Activated CD4-positive, alpha-beta T cell treated with anti-CD3 and anti-CD28 coated beads, Interleukin-2, amount 10 ng/mL, durations not matched to agents 24 days and 14 days (primary cell): ENCODE measurements at regions of chr5 and their contacts with region 1.

Region 1: DNA sequence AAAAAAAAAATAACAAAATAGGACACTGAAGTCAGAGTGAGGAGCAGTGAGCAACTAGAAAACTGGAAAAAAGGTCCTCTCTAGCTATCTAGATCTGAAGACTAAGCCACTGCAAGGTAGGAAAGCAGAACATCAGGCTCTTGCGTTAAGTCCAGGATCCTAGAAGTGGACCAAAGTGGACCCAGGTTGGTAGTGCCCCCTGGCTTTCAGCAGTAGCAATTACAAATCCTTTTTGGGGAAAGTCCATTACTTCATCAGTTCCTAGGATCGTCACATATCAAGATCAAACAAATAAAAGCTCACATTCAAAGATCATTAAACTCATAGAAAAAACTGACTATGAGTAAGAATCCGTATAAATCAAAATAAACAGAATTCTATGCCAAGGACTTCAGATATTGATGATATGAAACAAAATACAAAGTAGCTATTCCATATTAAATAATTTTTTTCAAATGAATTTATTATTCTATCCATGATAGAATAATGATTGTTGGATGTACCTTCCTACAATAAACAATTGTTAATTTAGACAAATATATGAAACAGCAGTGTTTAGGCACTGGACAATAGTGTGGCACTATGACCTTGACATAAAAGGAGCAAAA is 6.5 kb upstream of the RICTOR start:
- DNase-seq: peak; percentile 76
- H3K4me3 Mint-ChIP-seq: no peak overlapping the region
- H3K27ac Mint-ChIP-seq: no peak overlapping the region
- H3K4me1 Mint-ChIP-seq: peaks cover 20% of the 10 kb centered on the region
- H3K27me3 Mint-ChIP-seq: peaks cover 14% of the 10 kb centered on the region

Region 2: DNA sequence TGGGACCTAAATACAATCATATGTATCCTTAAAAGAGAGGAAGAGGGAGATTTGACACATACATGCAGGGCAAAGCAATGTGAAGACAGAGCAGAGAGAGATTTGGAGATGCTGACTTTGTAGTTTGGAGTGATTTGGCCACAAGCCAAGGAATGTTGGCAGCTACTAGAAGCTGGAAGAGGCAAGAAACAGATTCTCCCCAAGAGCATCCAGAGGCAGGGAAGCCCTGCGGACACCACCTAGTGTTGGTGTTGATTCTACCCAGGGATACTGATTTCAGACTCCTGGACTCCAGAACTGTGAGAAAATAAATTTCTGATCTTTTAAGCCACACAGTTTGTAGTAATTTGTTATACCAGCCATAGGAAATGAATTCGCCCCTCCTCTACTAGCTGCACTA is 299.8 kb before region 1 on chr5:
- intact Hi-C with region 1: no loop called
- DNase-seq: no peak
- H3K4me3 Mint-ChIP-seq: no peak overlapping the region
- H3K27ac Mint-ChIP-seq: no peak overlapping the region
- H3K4me1 Mint-ChIP-seq: no peaks in the 10 kb centered on the region
- H3K27me3 Mint-ChIP-seq: peaks cover 4% of the 10 kb centered on the region

Region 3: DNA sequence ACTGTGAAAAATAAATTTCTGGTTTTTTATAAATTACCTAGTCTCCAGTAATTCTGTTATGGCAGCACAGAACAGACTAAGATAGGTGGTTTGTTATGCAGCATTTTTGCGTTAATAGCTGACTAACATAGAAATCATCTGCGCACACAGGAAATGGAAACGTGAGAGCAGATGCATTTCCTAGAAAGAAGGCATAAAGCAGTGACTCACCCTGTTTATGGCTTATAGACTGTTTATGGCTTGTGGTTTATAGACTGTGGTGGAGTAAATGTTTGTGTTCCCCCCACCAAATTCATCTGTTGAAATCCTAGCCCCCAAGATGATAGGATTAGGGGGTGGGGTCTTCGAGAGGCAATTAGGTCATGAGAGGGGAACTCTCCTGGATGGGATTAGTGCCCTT is 253.2 kb before region 1 on chr5:
- intact Hi-C with region 1: loop called (anchors 5 kb)
- DNase-seq: peak; percentile 55
- H3K4me3 Mint-ChIP-seq: no peak overlapping the region
- H3K27ac Mint-ChIP-seq: peak overlapping the region; percentile 39
- H3K4me1 Mint-ChIP-seq: peaks cover 14% of the 10 kb centered on the region
- H3K27me3 Mint-ChIP-seq: peaks cover 10% of the 10 kb centered on the region

Region 4: GRCh38 chr5:38994324-38994927 is 86.3 kb before region 1 on chr5:
- intact Hi-C with region 1: loop called (anchors 1 kb)
- DNase-seq: peak; percentile 75
- H3K4me3 Mint-ChIP-seq: no peak overlapping the region
- H3K27ac Mint-ChIP-seq: no peak overlapping the region
- H3K4me1 Mint-ChIP-seq: peaks cover 9% of the 10 kb centered on the region
- H3K27me3 Mint-ChIP-seq: no peaks in the 10 kb centered on the region